Heart right ventricle (tissue), 16 donors: ENCODE measurements at regions of chr13 and their contacts with region 1.

Region 1: DNA sequence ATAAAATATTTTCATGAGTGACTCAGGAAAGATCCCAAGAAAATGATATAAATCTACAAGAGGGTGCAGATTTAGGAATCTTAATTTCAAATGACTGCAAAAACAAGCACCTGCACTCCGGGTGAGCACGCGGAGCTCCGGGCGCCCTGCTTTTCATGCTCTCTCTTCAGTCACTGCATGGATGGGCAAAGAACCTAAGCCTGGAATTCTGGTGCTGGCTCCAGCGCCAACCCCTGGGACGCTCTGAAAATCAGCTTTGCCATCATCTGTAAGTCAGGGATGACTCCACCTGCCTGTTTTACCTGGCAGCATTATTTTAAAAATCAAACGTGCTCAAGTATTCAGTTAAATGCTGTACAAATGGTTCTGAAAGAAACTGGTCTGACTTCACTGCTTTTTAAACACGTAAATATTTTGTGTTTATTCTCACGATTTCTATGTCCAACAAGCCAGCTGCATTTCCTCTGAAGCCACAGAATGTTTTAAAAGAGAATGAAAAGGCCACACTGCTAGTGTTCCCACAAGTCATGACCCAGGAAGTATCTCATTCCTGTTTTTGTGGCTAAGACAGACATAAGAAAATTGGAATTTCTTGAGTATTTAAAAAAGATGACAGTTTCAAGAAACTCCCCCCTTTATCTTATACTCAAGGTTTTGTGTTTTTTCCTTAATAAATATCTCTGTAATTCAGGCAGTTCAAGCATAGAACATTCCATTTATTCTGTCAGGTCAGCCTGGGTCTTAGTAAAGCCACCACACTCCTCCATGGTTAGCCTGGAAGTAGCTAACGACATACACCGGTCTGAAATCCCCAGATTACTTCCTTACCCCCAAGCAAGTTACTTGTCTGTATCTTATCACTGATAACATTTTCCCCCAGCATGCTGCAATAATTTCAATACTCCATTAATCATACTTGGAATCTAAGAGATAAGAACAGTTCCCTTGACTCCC is 81.1 kb downstream of the COL4A1 start:
- DNase-seq: no peak
- ATAC-seq: no peak
- H3K4me3 ChIP-seq: no peak overlapping the region
- H3K27ac ChIP-seq: peak overlapping the region in 9 of 10 donors; percentile 15 to 76 (median 52)
- H3K4me1 ChIP-seq: peaks cover 5 to 90% (median 63%) of the 10 kb centered on the region in 9 donors
- H3K27me3 ChIP-seq: no peaks in the 10 kb centered on the region
- CTCF ChIP-seq: no peak

Region 2: DNA sequence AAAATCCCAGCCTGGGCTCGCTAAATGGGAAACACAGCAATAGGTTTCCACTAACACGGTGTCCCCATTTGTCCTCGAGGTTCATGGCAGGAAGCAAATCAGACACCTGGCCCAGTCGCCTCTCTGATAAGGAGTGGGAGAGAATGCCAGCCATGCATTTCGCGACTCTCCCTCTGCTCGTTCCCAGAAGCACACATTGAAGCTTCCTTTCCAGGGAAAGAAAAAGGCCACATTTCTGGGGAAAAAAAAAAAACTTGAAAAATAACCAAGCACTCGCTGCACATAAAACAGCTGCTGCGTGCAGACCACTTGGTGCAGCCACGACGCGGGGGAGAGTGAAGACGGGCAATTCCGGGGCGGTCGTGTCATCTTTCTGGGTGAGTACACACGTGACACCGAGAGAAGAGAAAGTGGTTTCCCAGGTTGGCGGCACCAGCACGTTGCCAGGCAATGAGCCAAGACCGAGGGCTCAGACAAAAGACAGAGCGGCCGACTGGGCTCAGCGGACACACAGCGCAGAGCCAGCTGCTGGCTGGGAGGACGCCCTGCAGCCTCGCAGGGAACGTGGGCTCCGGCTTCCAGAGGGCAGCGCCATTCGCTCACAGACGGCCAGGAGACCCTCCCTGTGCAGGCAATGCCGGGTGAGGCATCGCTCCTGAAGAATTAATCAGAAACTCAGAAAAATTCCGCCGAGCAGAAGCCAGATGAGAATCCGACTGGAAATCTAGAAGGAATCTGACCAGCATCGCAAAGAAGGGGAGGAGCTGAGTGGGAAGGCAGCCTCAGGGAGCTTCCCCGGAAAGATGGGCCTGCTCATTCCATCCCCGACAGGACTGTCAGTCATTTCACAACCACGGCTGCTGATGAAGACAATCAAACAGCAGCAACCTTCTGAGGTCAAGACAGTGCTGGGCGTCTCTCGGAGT is 356.3 kb before region 1 on chr13:
- intact Hi-C with region 1: no loop called
- DNase-seq: peak; percentile 80 to 81
- ATAC-seq: peak; percentile 83 to 94 (median 88)
- H3K4me3 ChIP-seq: peak overlapping the region in 9 of 10 donors; percentile 15 to 52 (median 44)
- H3K27ac ChIP-seq: peak overlapping the region; percentile 42 to 87 (median 64)
- H3K4me1 ChIP-seq: peaks cover 0 to 38% (median 19%) of the 10 kb centered on the region in 9 donors
- H3K27me3 ChIP-seq: no peaks in the 10 kb centered on the region
- CTCF ChIP-seq: peak in 6 of 9 donors; percentile 16 to 50 (median 38)

Region 3: DNA sequence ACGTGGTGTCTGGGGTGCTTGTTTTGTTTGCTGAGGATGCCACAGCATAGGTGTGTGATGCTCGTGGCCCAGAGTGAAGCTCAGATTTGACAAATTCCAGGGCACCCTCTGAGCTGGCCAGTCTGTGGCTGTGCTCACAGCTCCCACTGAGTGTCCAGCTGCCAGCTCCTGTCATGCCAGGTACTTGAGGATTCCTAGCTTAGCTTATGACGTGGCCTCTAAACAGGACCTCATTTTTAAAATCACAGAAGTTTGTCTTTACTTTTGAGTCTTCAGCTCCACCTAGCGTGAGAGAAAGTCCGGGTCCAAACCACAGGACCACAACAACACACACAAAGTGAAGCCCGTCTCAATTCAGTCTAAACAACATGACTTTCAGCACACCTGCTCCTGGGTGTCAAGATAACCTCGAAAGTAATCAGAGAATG is 218.4 kb after region 1 on chr13:
- intact Hi-C with region 1: loop called in 4 of 10 experiments (anchors 1 to 5 kb)
- DNase-seq: no peak
- ATAC-seq: peak; percentile 41 to 83 (median 66)
- H3K4me3 ChIP-seq: no peak overlapping the region
- H3K27ac ChIP-seq: peak overlapping the region in 5 of 10 donors; percentile 6 to 44 (median 34)
- H3K4me1 ChIP-seq: peaks cover 0 to 20% (median 3%) of the 10 kb centered on the region in 9 donors
- H3K27me3 ChIP-seq: no peaks in the 10 kb centered on the region
- CTCF ChIP-seq: peak in 7 of 9 donors; percentile 25 to 55 (median 52)